Activated CD8-positive, alpha-beta T cell treated with anti-CD3 and anti-CD28 coated beads, Interleukin-2, amount 10 ng/mL, durations not matched to agents 7 days and 5 days (primary cell): ENCODE measurements at regions of chr11 and their contacts with region 1.

Region 1: GRCh38 chr11:59106363-59107336 is at the start of gene FAM111B:
- DNase-seq: peak; percentile 89
- ATAC-seq: peak; percentile 95
- H3K4me3 Mint-ChIP-seq: peak within 1 kb of the TSS; percentile 92
- H3K27ac Mint-ChIP-seq: peak within 1 kb of the TSS; percentile 86
- H3K4me1 Mint-ChIP-seq: peaks cover 70% of the 10 kb centered on the region
- H3K27me3 Mint-ChIP-seq: peaks cover 11% of the 10 kb centered on the region
- total RNA-seq, gene FAM111B: 66.2 to 69.0 TPM

Region 2: DNA sequence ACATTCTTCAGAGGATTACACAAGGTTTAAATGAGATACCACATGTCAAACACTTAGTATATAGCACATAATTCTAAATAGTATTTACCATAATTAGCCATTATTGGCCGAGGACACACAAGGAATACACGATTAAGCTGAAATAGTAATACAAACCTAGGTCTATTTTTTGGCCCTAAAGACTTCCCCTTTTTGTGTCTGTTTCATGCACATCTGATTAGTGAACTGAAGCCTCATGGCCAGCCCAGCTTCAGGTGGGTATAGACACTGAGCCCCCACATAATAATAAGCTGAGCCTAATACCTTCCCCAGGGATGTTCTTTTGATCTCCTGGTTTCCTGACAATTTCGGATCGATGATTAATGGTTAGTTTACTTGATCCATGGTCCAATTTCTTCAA is 18.5 kb before region 1 on chr11:
- CTCF ChIA-PET with region 1: no interaction called
- POLR2A ChIA-PET with region 1: no interaction called
- DNase-seq: no peak
- ATAC-seq: no peak
- H3K4me3 Mint-ChIP-seq: no peak overlapping the region
- H3K27ac Mint-ChIP-seq: no peak overlapping the region
- H3K4me1 Mint-ChIP-seq: no peaks in the 10 kb centered on the region
- H3K27me3 Mint-ChIP-seq: peaks cover 34% of the 10 kb centered on the region

Region 3: GRCh38 chr11:59142530-59143507 is 36.2 kb after region 1 on chr11 and contains the start of gene FAM111A:
- CTCF ChIA-PET with region 1: interaction called, 16 read pairs
- POLR2A ChIA-PET with region 1: interaction called, 27 read pairs
- DNase-seq: peak; percentile 94
- ATAC-seq: peak; percentile 93
- H3K4me3 Mint-ChIP-seq: peak within 1 kb of the TSS; percentile 97
- H3K27ac Mint-ChIP-seq: peak within 1 kb of the TSS; percentile 97
- H3K4me1 Mint-ChIP-seq: peaks cover 55% of the 10 kb centered on the region
- H3K27me3 Mint-ChIP-seq: no peaks in the 10 kb centered on the region
- total RNA-seq, gene FAM111A: 154 to 167 TPM